ENCODE measurements at regions of chr7 and their contacts with region 1.

Region 1: GRCh38 chr7:30740424-30741181 is 11.3 kb upstream of the INMT start:
- DNase-seq: peak; percentile 88
- CTCF ChIP-seq: peak; percentile 99

Region 2: GRCh38 chr7:30548762-30549344 is 191.8 kb before region 1 on chr7:
- CTCF ChIA-PET with region 1: interaction called, 44 read pairs
- POLR2A ChIA-PET with region 1: no interaction called
- DNase-seq: peak; percentile 56
- CTCF ChIP-seq: peak; percentile 62

Region 3: GRCh38 chr7:30750683-30751650 is 10.4 kb after region 1 on chr7:
- CTCF ChIA-PET with region 1: interaction called, 31 read pairs
- POLR2A ChIA-PET with region 1: no interaction called
- DNase-seq: no peak
- CTCF ChIP-seq: no peak

Region 4: GRCh38 chr7:30764030-30764975 is 23.7 kb after region 1 on chr7:
- CTCF ChIA-PET with region 1: interaction called, 26 read pairs
- POLR2A ChIA-PET with region 1: no interaction called
- DNase-seq: no peak
- CTCF ChIP-seq: no peak

Measured in GM10248 (cell line).